ENCODE measurements at regions of chr12 and their contacts with region 1.

Region 1: GRCh38 chr12:110124184-110124995 is at the start of gene IFT81:
- DNase-seq: peak; percentile 93
- H3K4me3 Mint-ChIP-seq: peak within 1 kb of the TSS; percentile 88
- H3K27ac Mint-ChIP-seq: peak within 1 kb of the TSS; percentile 83
- H3K4me1 Mint-ChIP-seq: no peaks in the 10 kb centered on the region
- H3K27me3 Mint-ChIP-seq: peaks cover 29% of the 10 kb centered on the region
- total RNA-seq, gene IFT81: 0.91 and 1.2 TPM in 2 replicates

Region 2: GRCh38 chr12:109713187-109713984 is 411.0 kb before region 1 on chr12 and contains the start of gene FAM222A:
- intact Hi-C with region 1: loop called (anchors 10 kb)
- DNase-seq: peak; percentile 94
- H3K4me3 Mint-ChIP-seq: no peak within 1 kb of the TSS
- H3K27ac Mint-ChIP-seq: no peak within 1 kb of the TSS
- H3K4me1 Mint-ChIP-seq: no peaks in the 10 kb centered on the region
- H3K27me3 Mint-ChIP-seq: peaks cover 62% of the 10 kb centered on the region
- total RNA-seq, gene FAM222A: 2.4 TPM in 2 replicates

Region 3: DNA sequence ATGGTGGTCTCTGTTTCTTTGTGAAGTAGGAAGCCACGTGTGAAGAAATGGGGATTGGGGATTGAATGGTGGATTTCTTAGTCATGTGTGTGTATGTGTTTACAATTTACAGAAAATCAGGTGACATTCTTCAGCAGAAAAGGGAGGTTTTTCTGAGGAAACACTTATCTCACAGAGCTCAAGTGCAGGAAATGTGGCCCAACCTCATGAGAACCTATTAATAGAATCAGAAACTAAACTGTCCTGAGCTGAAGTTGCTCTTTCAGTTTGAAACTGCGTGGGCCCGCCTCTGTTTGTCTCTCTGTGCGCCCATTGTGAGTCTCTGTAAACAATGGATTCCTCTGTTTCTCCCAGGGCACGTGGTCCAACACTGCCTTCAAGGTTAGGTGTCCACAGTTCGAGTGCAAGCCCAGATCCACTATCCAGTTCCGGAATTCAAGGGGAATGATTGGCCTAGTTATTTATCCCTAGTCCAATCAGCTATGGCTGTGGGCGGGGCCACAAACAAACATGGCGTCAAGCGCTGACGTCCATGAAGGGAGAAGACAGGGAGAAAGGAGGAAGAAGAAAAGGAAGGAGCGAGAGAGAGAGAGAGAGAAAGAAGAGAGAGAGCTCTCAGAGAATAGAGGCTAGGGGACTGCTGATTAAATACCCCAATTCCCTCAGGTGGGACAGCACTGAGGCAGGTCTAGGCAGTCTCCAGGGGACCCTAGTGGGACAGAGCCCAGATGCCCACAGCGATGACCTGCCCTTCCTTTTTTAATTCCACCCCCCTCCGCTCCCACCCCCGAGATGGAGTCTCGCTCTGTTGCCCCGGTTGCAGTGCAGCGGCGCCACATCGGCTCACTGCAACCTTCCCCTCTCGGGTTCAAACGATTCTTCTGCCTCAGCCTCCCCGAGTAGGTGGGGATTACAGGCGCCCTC is 44.7 kb before region 1 on chr12:
- intact Hi-C with region 1: loop called (anchors 1 kb)
- DNase-seq: peak; percentile 76
- H3K4me3 Mint-ChIP-seq: peak overlapping the region; percentile 66
- H3K27ac Mint-ChIP-seq: peak overlapping the region; percentile 98
- H3K4me1 Mint-ChIP-seq: peaks cover 43% of the 10 kb centered on the region
- H3K27me3 Mint-ChIP-seq: no peaks in the 10 kb centered on the region

Region 4: GRCh38 chr12:110149086-110149660 is 24.8 kb after region 1 on chr12:
- intact Hi-C with region 1: loop called (anchors 2 kb)
- DNase-seq: no peak
- H3K4me3 Mint-ChIP-seq: no peak overlapping the region
- H3K27ac Mint-ChIP-seq: no peak overlapping the region
- H3K4me1 Mint-ChIP-seq: peaks cover 18% of the 10 kb centered on the region
- H3K27me3 Mint-ChIP-seq: no peaks in the 10 kb centered on the region

Region 5: DNA sequence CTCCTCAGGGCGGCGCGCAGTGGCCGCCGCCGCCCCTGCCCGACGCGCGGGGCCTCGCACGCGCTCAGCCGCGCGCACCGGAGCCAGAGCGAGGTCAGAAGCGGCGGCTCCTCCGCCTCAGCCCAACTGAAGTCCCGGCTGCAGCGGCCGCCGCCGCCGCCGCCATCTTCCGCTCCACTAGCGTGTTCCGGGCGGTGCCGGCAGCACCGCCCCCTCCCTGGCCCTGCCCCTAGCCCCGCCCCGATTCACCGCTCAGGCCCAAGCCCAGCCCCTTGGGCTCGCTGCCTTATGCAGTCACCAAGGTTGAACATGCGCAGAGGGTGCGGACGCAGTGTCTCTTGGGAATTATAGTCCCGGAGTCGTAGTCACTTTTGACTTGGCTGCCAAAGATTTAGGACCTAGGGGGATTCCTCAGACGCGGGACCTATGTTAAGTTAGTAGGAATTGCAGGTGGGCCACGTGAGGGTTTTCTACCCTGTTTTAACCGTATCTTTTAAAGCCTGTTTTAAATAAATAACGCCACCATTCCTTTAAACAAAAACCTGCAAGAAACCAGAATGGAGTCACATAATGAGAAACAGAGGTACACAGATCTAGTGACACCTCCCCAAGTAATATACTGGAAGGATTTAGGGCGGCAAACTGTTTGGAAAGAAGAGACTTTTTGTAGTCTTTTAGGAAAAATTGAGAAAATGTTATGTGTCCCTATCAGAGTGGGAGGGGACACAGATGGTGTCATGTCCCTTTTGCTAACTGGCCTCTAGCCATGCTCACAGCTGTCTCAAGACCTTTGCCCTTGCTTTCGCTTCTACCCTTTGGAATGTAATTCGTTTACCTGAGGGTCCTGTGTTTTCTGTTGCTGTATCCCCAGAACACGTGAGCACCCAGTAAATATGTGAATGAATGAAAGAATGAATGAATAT is 459.0 kb after region 1 on chr12 and contains the start of gene PPTC7:
- intact Hi-C with region 1: loop called (anchors 10 kb)
- DNase-seq: peak; percentile 93
- H3K4me3 Mint-ChIP-seq: peak within 1 kb of the TSS; percentile 95
- H3K27ac Mint-ChIP-seq: peak within 1 kb of the TSS; percentile 96
- H3K4me1 Mint-ChIP-seq: peaks cover 61% of the 10 kb centered on the region
- H3K27me3 Mint-ChIP-seq: peaks cover 3% of the 10 kb centered on the region
- total RNA-seq, gene PPTC7: 57.9 and 59.1 TPM in 2 replicates

Measured in activated T-helper 1 cell treated with anti-CD3 and anti-CD28 coated beads, Interleukin-12 subunit alpha, Interleukin-12 subunit beta, Interleukin-2, Interleukin-4 antibody, amounts not matched to agents 30 ng/mL and 10 ng/mL and 1 ng/mL, durations not matched to agents 14 hours and 24 hours and 36 hours (primary cell).